T-cell (primary cell): ENCODE measurements at regions of chr12 and their contacts with region 1.

Region 1: DNA sequence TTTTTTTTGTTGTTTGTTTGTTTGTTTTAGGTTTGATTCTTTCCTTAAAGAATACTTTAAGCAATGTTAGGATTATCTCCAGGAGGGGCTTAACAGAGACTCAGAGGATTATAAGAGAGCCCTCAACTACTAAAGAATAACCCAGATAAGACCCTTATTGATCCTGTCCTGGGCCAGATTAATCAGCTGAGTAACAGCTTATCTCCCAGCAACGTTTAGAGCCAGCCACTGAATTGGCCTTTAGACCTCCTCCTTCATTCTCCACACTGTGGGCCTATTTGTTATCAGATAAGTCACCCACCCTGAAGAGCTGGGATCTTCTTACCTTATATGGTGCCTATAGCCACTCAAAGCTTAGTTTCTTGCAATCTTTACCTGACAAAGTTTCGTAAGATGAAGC is 71.1 kb downstream of the FIGNL2 start:
- DNase-seq: no peak
- ATAC-seq: no peak
- H3K4me3 ChIP-seq: no peak overlapping the region
- H3K4me3 Mint-ChIP-seq: no peak overlapping the region
- H3K27ac ChIP-seq: no peak overlapping the region
- H3K27ac Mint-ChIP-seq: no peak overlapping the region
- H3K4me1 ChIP-seq: peaks cover 5 to 11% of the 10 kb centered on the region in 2 experiments
- H3K4me1 Mint-ChIP-seq: peaks cover 0 to 13% (median 0%) of the 10 kb centered on the region in 3 donors
- H3K27me3 ChIP-seq: peaks cover 0 to 3% of the 10 kb centered on the region in 2 experiments
- H3K27me3 Mint-ChIP-seq: peaks cover 0 to 9% of the 10 kb centered on the region in 2 donors

Region 2: DNA sequence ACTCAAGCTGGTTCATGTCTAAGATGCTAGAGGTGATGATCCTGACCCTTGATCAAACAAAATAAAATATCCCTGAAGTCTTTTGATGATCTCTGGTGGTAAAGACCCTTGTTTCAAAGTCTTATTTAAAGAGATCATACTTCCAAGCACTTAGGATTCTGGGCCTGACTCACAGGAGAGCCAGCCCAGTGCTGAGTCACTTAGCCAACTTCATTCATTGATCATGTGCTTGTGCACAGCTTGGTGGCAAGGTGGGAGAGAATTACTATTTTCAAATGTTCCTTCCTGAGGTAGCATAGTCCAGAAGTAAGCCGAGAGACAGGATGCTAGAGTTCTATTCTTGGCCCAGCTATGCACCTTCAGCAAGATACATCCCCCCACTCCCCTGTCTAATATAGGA is 145.9 kb before region 1 on chr12:
- CTCF ChIA-PET with region 1: no interaction called
- POLR2A ChIA-PET with region 1: no interaction called
- DNase-seq: no peak
- ATAC-seq: no peak
- H3K4me3 ChIP-seq: no peak overlapping the region
- H3K4me3 Mint-ChIP-seq: no peak overlapping the region
- H3K27ac ChIP-seq: no peak overlapping the region
- H3K27ac Mint-ChIP-seq: no peak overlapping the region
- H3K4me1 ChIP-seq: no peaks in the 10 kb centered on the region
- H3K4me1 Mint-ChIP-seq: no peaks in the 10 kb centered on the region
- H3K27me3 ChIP-seq: no peaks in the 10 kb centered on the region
- H3K27me3 Mint-ChIP-seq: peaks cover 12 to 40% of the 10 kb centered on the region in 2 donors

Region 3: DNA sequence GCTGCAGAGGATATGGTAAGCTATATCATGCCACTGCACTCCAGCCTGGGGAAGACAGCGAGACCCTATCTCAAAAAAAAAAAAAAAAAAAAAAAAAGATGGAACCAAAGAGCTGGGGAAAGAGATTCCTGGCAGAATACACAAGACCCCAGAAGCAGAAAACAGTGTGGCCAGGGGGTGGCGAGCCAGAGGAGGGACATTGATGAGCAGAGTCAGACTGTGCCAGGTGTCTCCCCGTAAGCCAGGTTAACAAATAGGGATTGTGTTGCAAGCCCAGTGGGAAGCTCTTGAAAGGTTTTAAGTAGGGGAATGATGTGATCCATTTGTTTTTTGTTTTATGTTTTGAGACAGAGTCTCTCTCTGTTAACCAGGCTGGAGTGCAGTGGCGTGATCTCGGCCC is 15.0 kb after region 1 on chr12:
- CTCF ChIA-PET with region 1: no interaction called
- POLR2A ChIA-PET with region 1: interaction called in 1 of 2 experiments, 12 read pairs
- DNase-seq: no peak
- ATAC-seq: no peak
- H3K4me3 ChIP-seq: no peak overlapping the region
- H3K4me3 Mint-ChIP-seq: no peak overlapping the region
- H3K27ac ChIP-seq: no peak overlapping the region
- H3K27ac Mint-ChIP-seq: no peak overlapping the region
- H3K4me1 ChIP-seq: no peaks in the 10 kb centered on the region
- H3K4me1 Mint-ChIP-seq: no peaks in the 10 kb centered on the region
- H3K27me3 ChIP-seq: no peaks in the 10 kb centered on the region
- H3K27me3 Mint-ChIP-seq: no peaks in the 10 kb centered on the region